ENCODE measurements at regions of chr19 and their contacts with region 1.

Region 1: GRCh38 chr19:48445606-48446481 is at the start of gene GRWD1:
- DNase-seq: peak; percentile 96
- ATAC-seq: peak; percentile 87
- H3K4me3 ChIP-seq: peak within 1 kb of the TSS; percentile 64 to 99 (median 94)
- H3K4me3 Mint-ChIP-seq: peak within 1 kb of the TSS; percentile 97
- H3K27ac ChIP-seq: peak within 1 kb of the TSS; percentile 88 to 91
- H3K27ac Mint-ChIP-seq: peak within 1 kb of the TSS; percentile 98
- H3K4me1 ChIP-seq: peaks cover 22 to 27% of the 10 kb centered on the region in 2 donors
- H3K4me1 Mint-ChIP-seq: peaks cover 40% of the 10 kb centered on the region
- H3K27me3 ChIP-seq: peaks cover 0 to 24% (median 11%) of the 10 kb centered on the region in 4 experiments
- H3K27me3 Mint-ChIP-seq: peaks cover 22% of the 10 kb centered on the region
- CTCF ChIP-seq: no peak
- total RNA-seq, gene GRWD1: 38.6 and 40.7 TPM in 2 replicates

Region 2: DNA sequence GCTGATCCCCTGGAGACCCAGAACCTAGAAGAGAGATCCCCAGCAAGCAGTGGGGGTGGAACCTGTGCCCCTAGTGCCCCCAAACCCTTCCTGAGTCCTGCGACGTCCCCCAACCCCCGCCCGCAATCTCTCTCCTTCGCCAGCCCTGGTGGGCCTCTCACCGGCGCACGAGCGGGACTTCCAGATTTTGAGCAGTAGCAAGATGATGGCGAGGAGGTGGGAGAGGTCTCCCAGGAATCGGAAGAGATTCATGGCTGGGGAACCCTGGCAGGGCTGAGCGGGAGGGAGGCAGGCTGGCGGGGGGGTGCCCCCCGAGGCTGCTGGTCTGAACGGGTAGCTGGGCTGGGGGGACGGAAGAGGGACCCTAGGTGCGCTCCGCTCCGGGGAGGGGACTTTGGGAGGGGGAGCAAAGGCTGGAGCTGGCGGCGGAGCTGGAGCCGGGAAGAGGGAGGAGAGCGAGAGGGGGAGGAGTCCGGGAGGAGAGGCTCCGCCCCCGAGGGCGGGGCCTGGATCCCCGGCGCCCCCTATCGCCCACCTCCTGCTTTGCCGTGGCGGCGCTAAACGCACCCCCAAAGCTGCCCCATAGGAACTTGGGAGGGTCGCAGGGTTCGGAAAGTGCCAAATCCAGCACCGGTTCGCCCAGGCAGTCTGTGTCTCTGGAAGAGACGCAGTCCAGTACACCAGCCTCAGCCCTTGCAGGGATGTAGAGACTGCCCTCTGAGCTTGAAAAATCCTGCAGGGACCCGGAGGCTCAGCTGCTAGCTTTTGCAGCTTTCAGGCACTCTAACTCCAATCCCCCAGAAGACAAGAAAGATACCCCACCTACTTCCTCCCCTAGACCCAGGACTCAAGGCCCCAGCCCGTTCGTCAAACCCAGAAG is 54.5 kb before region 1 on chr19 and contains the start of gene KDELR1:
- CTCF ChIA-PET with region 1: interaction called, 4 read pairs
- POLR2A ChIA-PET with region 1: interaction called, 9 read pairs
- intact Hi-C with region 1: loop called (anchors 1 kb)
- DNase-seq: peak; percentile 86
- ATAC-seq: peak; percentile 88
- H3K4me3 ChIP-seq: peak within 1 kb of the TSS; percentile 71 to 93 (median 85)
- H3K4me3 Mint-ChIP-seq: peak within 1 kb of the TSS; percentile 95
- H3K27ac ChIP-seq: peak within 1 kb of the TSS; percentile 79 to 80
- H3K27ac Mint-ChIP-seq: peak within 1 kb of the TSS; percentile 92
- H3K4me1 ChIP-seq: peaks cover 39 to 45% of the 10 kb centered on the region in 2 donors
- H3K4me1 Mint-ChIP-seq: peaks cover 24% of the 10 kb centered on the region
- H3K27me3 ChIP-seq: peaks cover 0 to 39% (median 23%) of the 10 kb centered on the region in 4 experiments
- H3K27me3 Mint-ChIP-seq: peaks cover 25% of the 10 kb centered on the region
- CTCF ChIP-seq: peak; percentile 88
- total RNA-seq, gene KDELR1: 60.5 and 62.7 TPM in 2 replicates

Region 3: GRCh38 chr19:48419158-48419920 is 26.5 kb before region 1 on chr19:
- CTCF ChIA-PET with region 1: no interaction called
- POLR2A ChIA-PET with region 1: no interaction called
- intact Hi-C with region 1: loop called (anchors 1 kb)
- DNase-seq: peak; percentile 80
- ATAC-seq: peak; percentile 82
- H3K4me3 ChIP-seq: peak overlapping the region in 4 of 5 experiments; percentile 10 to 43 (median 20)
- H3K4me3 Mint-ChIP-seq: peak overlapping the region; percentile 90
- H3K27ac ChIP-seq: no peak overlapping the region
- H3K27ac Mint-ChIP-seq: peak overlapping the region; percentile 80
- H3K4me1 ChIP-seq: peaks cover 16 to 17% of the 10 kb centered on the region in 2 donors
- H3K4me1 Mint-ChIP-seq: peaks cover 24% of the 10 kb centered on the region
- H3K27me3 ChIP-seq: peaks cover 0 to 43% (median 9%) of the 10 kb centered on the region in 4 experiments
- H3K27me3 Mint-ChIP-seq: peaks cover 35% of the 10 kb centered on the region
- CTCF ChIP-seq: no peak

Region 4: DNA sequence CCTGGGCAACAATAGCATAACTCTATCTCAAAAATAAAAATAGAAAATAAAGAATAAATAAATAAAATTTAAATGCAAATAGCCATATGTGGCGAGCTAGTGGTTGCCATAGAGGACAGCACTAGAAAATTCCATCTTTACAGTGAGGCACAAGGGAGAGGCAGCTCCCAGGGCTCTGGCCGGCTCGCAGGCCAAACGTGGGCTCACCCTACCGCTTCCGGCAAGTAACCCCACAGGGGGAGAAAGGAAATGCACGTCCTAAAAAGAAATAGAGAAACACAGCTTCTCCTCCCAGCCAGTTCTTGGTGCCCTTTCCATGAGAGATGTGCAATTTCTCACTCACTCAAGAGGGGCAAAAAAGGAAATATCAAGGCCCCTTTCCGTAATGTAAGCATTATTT is 12.5 kb before region 1 on chr19:
- CTCF ChIA-PET with region 1: no interaction called
- POLR2A ChIA-PET with region 1: no interaction called
- intact Hi-C with region 1: no loop called
- DNase-seq: no peak
- ATAC-seq: no peak
- H3K4me3 ChIP-seq: no peak overlapping the region
- H3K4me3 Mint-ChIP-seq: no peak overlapping the region
- H3K27ac ChIP-seq: no peak overlapping the region
- H3K27ac Mint-ChIP-seq: no peak overlapping the region
- H3K4me1 ChIP-seq: no peaks in the 10 kb centered on the region
- H3K4me1 Mint-ChIP-seq: no peaks in the 10 kb centered on the region
- H3K27me3 ChIP-seq: peaks cover 0 to 13% (median 4%) of the 10 kb centered on the region in 4 experiments
- H3K27me3 Mint-ChIP-seq: peaks cover 34% of the 10 kb centered on the region
- CTCF ChIP-seq: no peak

Region 5: GRCh38 chr19:48468775-48469288 is 23.0 kb after region 1 on chr19:
- CTCF ChIA-PET with region 1: interaction called, 5 read pairs
- POLR2A ChIA-PET with region 1: interaction called, 3 read pairs
- intact Hi-C with region 1: loop called (anchors 1 kb)
- DNase-seq: peak; percentile 100
- ATAC-seq: peak; percentile 87
- H3K4me3 ChIP-seq: peak overlapping the region; percentile 8 to 90 (median 83)
- H3K4me3 Mint-ChIP-seq: peak overlapping the region; percentile 92
- H3K27ac ChIP-seq: peak overlapping the region; percentile 52 to 84
- H3K27ac Mint-ChIP-seq: peak overlapping the region; percentile 89
- H3K4me1 ChIP-seq: peaks cover 11 to 15% of the 10 kb centered on the region in 2 donors
- H3K4me1 Mint-ChIP-seq: peaks cover 17% of the 10 kb centered on the region
- H3K27me3 ChIP-seq: peaks cover 0 to 3% (median 0%) of the 10 kb centered on the region in 4 experiments
- H3K27me3 Mint-ChIP-seq: no peaks in the 10 kb centered on the region
- CTCF ChIP-seq: no peak

Region 6: DNA sequence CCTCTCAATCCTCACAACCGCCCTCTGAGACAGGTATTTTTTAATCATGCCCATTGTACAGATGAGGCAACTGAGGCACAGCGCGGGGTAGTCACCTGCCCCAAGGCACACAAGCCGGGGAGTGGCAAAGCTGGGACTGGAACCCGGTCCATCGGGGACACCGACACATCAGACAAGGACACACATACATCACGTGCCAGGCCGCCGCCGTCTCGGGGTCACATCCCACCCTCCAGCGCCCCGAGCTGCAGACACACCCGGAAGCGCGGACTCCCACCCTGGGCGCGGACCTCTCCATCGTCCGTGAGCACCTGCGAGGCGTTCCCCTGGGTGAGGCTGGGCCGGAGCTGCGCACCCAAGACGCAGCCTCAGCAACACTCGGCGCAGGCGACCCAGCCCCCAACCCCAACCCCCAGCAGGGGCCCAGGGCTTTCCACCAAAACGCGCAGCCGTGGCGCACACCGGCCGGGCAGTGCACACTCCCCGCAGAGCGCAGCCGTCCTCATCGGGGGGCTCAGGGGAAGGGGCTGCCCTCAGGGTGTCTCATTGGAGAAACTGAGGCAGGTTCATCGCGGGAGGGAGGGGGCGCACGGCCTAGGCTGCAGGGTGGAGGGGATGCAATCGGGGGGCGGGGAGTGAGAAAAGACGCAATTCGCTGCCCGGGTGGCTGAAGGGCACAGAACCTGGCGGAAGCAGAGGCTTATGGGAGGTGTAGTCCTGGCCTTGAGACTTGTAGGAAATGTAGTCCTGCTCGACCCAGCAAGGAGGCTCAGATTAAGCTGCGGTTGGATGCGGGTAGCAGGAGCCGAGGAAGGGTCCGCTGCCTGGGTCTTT is 67.7 kb after region 1 on chr19:
- CTCF ChIA-PET with region 1: no interaction called
- POLR2A ChIA-PET with region 1: no interaction called
- intact Hi-C with region 1: loop called (anchors 1 kb)
- DNase-seq: peak; percentile 78
- ATAC-seq: peak; percentile 84
- H3K4me3 ChIP-seq: peak overlapping the region; percentile 21 to 82 (median 73)
- H3K4me3 Mint-ChIP-seq: no peak overlapping the region
- H3K27ac ChIP-seq: no peak overlapping the region
- H3K27ac Mint-ChIP-seq: no peak overlapping the region
- H3K4me1 ChIP-seq: peaks cover 28 to 30% of the 10 kb centered on the region in 2 donors
- H3K4me1 Mint-ChIP-seq: peaks cover 15% of the 10 kb centered on the region
- H3K27me3 ChIP-seq: peaks cover 0 to 37% (median 14%) of the 10 kb centered on the region in 4 experiments
- H3K27me3 Mint-ChIP-seq: peaks cover 15% of the 10 kb centered on the region
- CTCF ChIP-seq: no peak

Region 7: DNA sequence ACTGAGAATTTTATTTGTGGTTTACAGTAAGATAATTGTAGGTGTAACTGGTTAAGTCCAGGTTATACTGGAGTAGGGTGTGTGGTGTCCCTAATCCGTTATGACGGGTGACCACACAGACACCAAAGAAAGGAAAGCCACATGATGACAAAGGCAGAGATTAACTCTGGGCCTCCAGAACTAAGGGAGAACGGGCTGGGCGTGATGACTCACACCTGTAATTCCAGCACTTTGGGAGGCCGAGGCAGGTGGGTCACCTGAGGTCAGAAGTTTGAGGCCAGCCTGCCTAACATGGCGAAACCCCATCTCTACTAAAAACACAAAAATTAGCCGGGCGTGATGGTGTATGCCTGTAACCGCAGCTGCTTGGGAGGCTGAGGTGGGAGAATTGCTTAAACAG is 239.7 kb after region 1 on chr19:
- CTCF ChIA-PET with region 1: no interaction called
- POLR2A ChIA-PET with region 1: no interaction called
- intact Hi-C with region 1: no loop called
- DNase-seq: no peak
- ATAC-seq: no peak
- H3K4me3 ChIP-seq: no peak overlapping the region
- H3K4me3 Mint-ChIP-seq: no peak overlapping the region
- H3K27ac ChIP-seq: no peak overlapping the region
- H3K27ac Mint-ChIP-seq: no peak overlapping the region
- H3K4me1 ChIP-seq: no peaks in the 10 kb centered on the region
- H3K4me1 Mint-ChIP-seq: peaks cover 2% of the 10 kb centered on the region
- H3K27me3 ChIP-seq: no peaks in the 10 kb centered on the region
- H3K27me3 Mint-ChIP-seq: no peaks in the 10 kb centered on the region
- CTCF ChIP-seq: no peak

Measured in B cell (primary cell).